ENCODE measurements at regions of chr6 and their contacts with region 1.

Region 1: DNA sequence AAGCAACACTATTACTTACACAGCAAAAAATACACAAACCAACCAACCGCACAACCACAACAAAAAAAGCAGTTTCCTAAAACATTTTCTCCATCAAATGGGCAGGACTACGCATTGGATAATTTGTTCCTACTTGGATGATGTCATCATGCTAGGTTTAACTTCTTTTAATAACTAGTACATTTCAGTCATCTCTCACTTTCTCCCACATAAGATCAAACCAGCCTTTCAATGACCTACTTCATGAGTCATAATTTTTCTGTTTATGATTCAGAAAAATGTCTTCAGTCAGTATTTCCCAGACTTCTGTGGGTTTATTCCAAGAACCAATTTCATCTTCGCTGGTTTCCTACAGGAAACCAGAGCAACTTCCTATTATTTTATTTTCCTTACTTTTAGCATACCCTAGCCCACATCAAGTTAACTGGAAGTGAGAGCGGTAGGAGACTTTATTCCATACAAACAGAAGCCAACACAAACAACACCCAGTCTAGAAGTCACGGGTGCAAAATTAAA is 134.2 kb downstream of the GMDS start:
- DNase-seq: no peak

Region 2: DNA sequence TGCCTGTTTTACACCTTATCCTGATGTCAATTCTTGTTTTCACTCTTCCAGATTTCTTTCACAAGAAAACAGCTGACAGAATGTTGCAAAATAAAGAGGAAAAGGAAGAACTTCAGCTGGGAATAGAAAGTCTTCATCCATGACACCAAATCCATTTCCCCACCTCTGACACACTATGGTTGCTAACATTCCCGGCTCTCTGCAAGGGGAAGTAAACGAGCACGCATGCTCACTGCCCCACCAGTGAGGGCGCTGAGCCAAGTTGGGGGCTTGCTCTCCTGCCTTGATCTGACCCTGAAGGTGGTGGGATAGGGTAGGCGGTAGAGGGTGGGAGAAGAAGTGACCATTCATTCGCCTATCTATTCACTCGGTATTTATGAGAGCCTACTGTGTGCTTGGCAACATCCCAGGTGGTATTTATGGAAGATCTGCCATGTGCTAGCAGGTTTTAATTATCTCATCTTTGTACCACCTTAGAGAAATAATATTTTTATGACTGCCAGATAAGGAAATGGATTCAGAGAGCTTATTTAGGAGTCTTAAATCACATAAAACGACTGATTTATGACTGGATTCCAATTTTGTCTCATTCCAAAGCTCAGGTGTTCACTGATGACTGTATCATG is 295.3 kb before region 1 on chr6:
- in situ Hi-C with region 1: no loop called
- DNase-seq: no peak

Region 3: GRCh38 chr6:2037237-2037926 is 73.8 kb before region 1 on chr6:
- in situ Hi-C with region 1: no loop called
- DNase-seq: peak; percentile 52

Region 4: GRCh38 chr6:2186516-2186915 is 75.3 kb after region 1 on chr6:
- in situ Hi-C with region 1: loop called (anchors 10 kb)
- DNase-seq: no peak

Region 5: DNA sequence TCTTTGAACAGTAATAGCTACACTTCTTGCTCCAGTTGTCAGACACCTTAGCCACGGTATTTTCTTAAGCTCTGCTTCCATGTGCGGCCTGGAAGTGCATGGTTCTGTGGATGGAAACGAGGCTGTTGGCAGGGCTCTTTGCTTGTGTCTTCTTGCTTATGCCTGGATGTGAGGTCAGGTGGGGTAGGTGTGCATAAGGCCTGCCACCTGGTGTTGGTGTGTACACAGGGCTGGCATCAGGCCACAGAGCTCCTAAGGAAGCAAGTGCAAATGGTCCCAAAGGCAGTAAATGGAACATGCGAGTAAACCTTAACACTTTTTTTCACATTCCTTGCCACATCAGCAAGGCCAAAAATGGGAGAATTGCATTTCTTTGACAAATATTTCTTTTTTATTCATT is 292.3 kb after region 1 on chr6:
- in situ Hi-C with region 1: no loop called
- DNase-seq: no peak

Measured in SK-MEL-5 (cell line).